ENCODE measurements at regions of chr7 and their contacts with region 1.

Region 1: GRCh38 chr7:6447581-6448199 is at the start of gene DAGLB:
- DNase-seq: peak; percentile 82
- H3K4me3 ChIP-seq: peak within 1 kb of the TSS; percentile 98
- H3K27ac ChIP-seq: peak within 1 kb of the TSS; percentile 90
- H3K27me3 ChIP-seq: no peaks in the 10 kb centered on the region
- CTCF ChIP-seq: no peak
- polyA plus RNA-seq, gene DAGLB: 23.1 and 25.3 TPM in 2 replicates

Region 2: GRCh38 chr7:6323967-6324701 is 123.6 kb before region 1 on chr7:
- CTCF ChIA-PET with region 1: no interaction called
- POLR2A ChIA-PET with region 1: no interaction called
- DNase-seq: no peak
- H3K4me3 ChIP-seq: no peak overlapping the region
- H3K27ac ChIP-seq: no peak overlapping the region
- H3K27me3 ChIP-seq: no peaks in the 10 kb centered on the region
- CTCF ChIP-seq: no peak

Region 3: DNA sequence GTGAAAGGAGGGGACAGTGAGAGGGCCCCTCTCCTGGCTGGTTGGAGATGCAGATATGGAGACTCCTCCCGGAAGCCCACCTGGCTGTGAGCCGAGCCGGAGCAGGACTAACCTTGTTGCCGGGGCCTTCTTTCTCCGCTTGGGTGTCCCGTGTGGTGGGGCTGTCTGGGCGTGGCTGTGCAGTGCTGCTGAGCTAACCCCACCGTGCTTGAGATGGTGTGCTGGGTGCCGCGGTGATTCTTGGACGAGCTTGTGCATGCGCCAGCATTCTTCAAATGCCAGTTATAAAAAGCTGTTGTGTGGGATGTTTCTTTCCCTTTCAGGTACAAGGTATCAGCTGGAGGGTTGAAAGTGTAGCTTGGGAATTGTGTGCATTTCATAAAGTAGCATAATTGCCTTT is 48.7 kb before region 1 on chr7:
- CTCF ChIA-PET with region 1: no interaction called
- POLR2A ChIA-PET with region 1: interaction called, 11 read pairs
- DNase-seq: no peak
- H3K4me3 ChIP-seq: no peak overlapping the region
- H3K27ac ChIP-seq: no peak overlapping the region
- H3K27me3 ChIP-seq: no peaks in the 10 kb centered on the region
- CTCF ChIP-seq: no peak